ENCODE measurements at regions of chr11 and their contacts with region 1.

Region 1: GRCh38 chr11:62705880-62706849 is 1.1 kb downstream of the BSCL2 start:
- DNase-seq: peak; percentile 95
- H3K4me3 ChIP-seq: peak overlapping the region; percentile 13 to 81 (median 41)
- H3K27ac ChIP-seq: peak overlapping the region; percentile 37
- H3K4me1 ChIP-seq: peaks cover 25% of the 10 kb centered on the region
- H3K27me3 ChIP-seq: no peaks in the 10 kb centered on the region
- CTCF ChIP-seq: no peak
- POLR2A ChIP-seq: peak; percentile 49

Region 2: DNA sequence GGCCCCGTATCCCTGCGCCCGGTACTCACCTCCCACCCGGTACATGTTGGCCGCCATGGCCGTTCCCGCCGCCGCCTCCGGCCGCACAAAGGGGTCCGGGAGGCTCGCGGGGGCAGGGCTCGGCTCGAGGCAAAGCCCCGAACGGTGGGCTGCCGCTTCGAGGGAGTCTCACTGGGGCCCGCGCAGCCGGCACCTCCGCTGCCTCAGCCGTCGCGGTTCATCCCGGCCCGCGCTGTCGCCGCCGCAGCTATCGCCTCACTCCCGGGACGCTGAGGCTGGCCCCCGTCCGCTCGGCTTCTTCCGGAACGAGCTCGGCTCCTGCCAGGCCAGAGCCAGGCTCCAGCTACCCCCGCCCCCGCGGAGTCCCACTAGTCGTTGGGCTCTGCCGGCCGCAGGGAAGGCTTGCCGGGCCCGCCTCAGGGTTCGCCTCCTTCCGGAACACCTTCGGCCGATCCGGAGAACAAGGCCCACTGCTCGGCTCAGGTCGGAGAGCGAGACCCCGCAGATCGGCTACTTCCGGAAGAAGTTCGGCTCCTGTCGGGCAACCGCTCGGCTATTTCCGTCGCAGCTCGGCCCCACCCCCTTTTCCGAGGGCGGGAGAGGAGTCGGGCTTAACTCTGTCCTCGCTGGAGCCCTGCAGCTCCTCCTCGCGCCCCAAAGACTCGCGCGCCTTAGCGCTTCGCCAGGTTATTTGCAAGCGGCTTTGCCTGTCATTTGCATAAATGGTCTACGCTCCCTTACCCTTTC is 104.6 kb before region 1 on chr11 and contains the start of gene MTA2:
- CTCF ChIA-PET with region 1: no interaction called
- POLR2A ChIA-PET with region 1: no interaction called
- dilution Hi-C with region 1: no loop called
- intact Hi-C with region 1: loop called (anchors 2 kb)
- DNase-seq: peak; percentile 99
- H3K4me3 ChIP-seq: peak within 1 kb of the TSS; percentile 61 to 98 (median 92)
- H3K27ac ChIP-seq: peak within 1 kb of the TSS; percentile 54
- H3K4me1 ChIP-seq: peaks cover 19% of the 10 kb centered on the region
- H3K27me3 ChIP-seq: no peaks in the 10 kb centered on the region
- CTCF ChIP-seq: no peak
- POLR2A ChIP-seq: peak; percentile 75
- total RNA-seq, gene MTA2: 166 and 176 TPM in 2 replicates

Region 3: GRCh38 chr11:62652161-62653006 is 53.8 kb before region 1 on chr11:
- CTCF ChIA-PET with region 1: no interaction called
- POLR2A ChIA-PET with region 1: no interaction called
- dilution Hi-C with region 1: no loop called
- intact Hi-C with region 1: loop called (anchors 5 kb)
- DNase-seq: no peak
- H3K4me3 ChIP-seq: peak overlapping the region; percentile 61 to 76 (median 74)
- H3K27ac ChIP-seq: peak overlapping the region; percentile 73
- H3K4me1 ChIP-seq: peaks cover 2% of the 10 kb centered on the region
- H3K27me3 ChIP-seq: no peaks in the 10 kb centered on the region
- CTCF ChIP-seq: no peak
- POLR2A ChIP-seq: no peak

Region 4: DNA sequence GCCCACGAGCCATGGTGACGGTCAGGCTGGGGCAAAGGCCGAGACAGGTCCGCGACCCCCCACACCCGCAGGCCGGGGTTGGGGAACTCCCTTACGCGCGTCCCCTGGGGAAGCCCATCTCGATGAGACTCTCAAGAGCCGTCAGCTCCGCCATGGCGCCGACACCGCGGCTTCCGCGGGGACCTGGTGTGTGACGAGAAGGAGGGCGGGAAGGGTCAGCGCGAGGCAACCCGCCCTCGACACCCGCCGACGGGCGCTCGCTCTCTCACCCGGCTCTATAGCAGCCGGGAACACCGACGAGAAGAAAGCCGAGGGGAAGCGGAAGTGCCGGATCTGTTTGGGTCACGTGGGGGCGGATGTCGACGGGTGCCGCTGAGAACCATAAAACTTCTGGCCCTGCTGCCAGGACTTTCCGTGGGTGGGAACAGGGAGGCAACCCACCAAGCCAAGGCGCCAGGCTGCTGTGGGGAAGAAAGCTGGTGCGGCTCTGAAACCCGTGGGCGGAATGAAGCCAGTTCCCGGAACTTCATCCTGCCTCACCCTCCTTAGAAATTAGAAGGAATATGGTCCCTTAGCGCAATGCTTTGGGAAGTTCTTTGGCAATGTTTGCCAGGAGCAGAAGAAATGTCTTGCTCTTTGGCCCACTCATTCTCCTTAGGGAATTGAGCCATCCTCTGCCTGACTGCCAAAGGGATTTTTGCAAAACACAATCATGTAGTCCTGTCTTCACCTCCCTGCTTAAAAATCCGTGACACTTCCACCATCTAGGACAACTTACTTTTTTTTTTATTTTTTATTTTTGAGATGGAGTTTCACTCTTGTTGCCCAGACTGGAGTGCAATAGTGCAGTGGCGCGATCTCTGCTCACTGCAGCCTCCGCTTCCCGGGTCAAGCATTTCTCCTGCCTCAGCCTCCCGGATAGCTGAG is 27.1 kb before region 1 on chr11 and contains the start of gene UBXN1:
- CTCF ChIA-PET with region 1: interaction called, 13 read pairs
- POLR2A ChIA-PET with region 1: no interaction called
- dilution Hi-C with region 1: no loop called
- intact Hi-C with region 1: no loop called
- DNase-seq: peak; percentile 89
- H3K4me3 ChIP-seq: peak within 1 kb of the TSS; percentile 76 to 93 (median 79)
- H3K27ac ChIP-seq: peak within 1 kb of the TSS; percentile 74
- H3K4me1 ChIP-seq: peaks cover 11% of the 10 kb centered on the region
- H3K27me3 ChIP-seq: no peaks in the 10 kb centered on the region
- CTCF ChIP-seq: no peak
- POLR2A ChIP-seq: peak; percentile 84
- total RNA-seq, gene UBXN1: 112 and 113 TPM in 2 replicates

Region 5: DNA sequence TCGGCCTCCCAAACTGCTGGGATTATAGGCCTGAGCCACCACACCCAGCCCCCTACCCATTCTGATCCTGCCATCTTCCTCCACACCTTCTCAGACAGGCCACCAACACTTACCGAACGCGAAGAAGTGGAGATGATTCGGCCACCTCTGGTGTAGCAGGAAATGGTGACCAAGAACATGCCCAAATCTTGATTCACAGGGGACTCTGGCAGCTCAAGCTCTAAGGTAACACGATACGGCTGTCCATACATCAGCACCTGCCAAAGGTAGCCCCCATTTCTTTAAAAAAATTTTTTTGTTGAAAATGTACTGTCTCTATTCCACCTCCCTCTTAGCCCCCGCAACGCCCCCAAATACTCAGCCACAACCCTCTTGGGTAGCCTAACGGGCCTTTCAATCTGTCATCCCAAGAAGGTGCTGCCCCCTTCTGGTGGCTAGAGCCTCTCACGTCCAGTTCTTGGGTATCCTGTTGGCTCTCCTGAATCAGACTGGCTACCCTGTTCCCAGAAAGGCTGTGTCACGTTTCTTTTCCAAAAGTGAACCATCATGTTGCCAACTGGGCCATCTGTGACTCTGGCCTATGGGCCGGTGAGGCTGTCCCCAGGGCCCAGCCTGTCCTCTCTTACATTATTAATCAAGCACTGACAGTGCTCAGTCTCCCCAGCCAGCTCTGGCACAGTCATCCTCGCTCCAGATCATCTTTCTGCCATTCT is 11.6 kb before region 1 on chr11:
- CTCF ChIA-PET with region 1: interaction called, 14 read pairs
- POLR2A ChIA-PET with region 1: no interaction called
- dilution Hi-C with region 1: no loop called
- intact Hi-C with region 1: no loop called
- DNase-seq: peak; percentile 68
- H3K4me3 ChIP-seq: no peak overlapping the region
- H3K27ac ChIP-seq: no peak overlapping the region
- H3K4me1 ChIP-seq: no peaks in the 10 kb centered on the region
- H3K27me3 ChIP-seq: no peaks in the 10 kb centered on the region
- CTCF ChIP-seq: peak; percentile 80 to 83
- POLR2A ChIP-seq: no peak

Region 6: GRCh38 chr11:62737196-62737595 is 31.0 kb after region 1 on chr11:
- CTCF ChIA-PET with region 1: no interaction called
- POLR2A ChIA-PET with region 1: no interaction called
- dilution Hi-C with region 1: no loop called
- intact Hi-C with region 1: no loop called
- DNase-seq: no peak
- H3K4me3 ChIP-seq: no peak overlapping the region
- H3K27ac ChIP-seq: no peak overlapping the region
- H3K4me1 ChIP-seq: no peaks in the 10 kb centered on the region
- H3K27me3 ChIP-seq: no peaks in the 10 kb centered on the region
- CTCF ChIP-seq: no peak
- POLR2A ChIP-seq: no peak

Region 7: DNA sequence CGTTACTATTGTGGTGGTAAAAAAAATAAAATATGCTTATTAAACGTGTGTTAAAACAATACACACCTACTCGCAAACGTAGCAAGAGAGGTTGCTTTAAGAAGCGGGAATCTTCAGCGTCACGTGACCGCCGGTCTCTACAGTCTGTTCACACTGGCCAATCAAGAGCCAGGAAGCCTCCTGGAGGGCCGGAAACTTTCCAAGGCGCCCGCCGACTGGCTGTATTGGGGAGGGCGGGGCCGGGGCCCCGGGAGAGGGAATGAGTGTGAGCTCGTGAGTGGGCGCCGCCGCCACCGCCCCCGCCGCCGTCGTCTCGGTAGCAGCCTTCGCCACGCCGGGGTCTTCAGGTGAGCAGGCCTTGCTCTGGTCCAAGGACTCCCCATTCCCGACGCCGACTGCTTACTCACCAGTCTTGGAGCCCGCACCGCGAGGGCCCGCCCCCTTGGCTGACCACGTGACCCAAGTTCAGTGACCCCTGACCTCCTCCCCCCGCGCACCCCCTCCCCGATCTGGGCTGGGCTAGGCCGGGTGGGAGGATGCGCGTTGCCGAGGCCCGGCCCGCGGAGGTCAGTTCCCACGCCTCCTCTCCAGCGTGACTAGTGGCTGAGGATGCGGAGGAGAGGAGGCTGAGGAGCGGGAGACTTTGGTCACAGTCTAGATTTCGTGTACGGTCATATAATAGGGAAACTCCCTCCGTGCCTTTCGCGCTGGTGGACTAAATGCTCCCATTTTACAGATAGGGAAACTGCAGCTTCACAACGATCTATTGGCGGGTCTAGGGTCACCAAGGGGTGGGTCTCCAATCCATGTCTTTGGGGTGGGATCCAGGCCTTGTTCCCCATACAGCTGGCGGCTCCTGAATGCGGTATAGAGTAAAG is 65.2 kb after region 1 on chr11 and contains the start of gene TAF6L:
- CTCF ChIA-PET with region 1: no interaction called
- POLR2A ChIA-PET with region 1: no interaction called
- dilution Hi-C with region 1: no loop called
- intact Hi-C with region 1: loop called (anchors 1 kb)
- DNase-seq: peak; percentile 96
- H3K4me3 ChIP-seq: peak within 1 kb of the TSS; percentile 4 to 53 (median 48)
- H3K27ac ChIP-seq: peak within 1 kb of the TSS; percentile 39
- H3K4me1 ChIP-seq: peaks cover 11% of the 10 kb centered on the region
- H3K27me3 ChIP-seq: no peaks in the 10 kb centered on the region
- CTCF ChIP-seq: no peak
- POLR2A ChIP-seq: peak; percentile 74
- total RNA-seq, gene TAF6L: 28.9 and 30.4 TPM in 2 replicates